ENCODE measurements at regions of chr15 and their contacts with region 1.

Region 1: GRCh38 chr15:40357723-40358470 is at the start of gene DISP2:
- DNase-seq: peak; percentile 95
- ATAC-seq: peak; percentile 93
- H3K4me3 ChIP-seq: peak within 1 kb of the TSS in 4 of 5 experiments; percentile 48 to 78 (median 58)
- H3K4me3 Mint-ChIP-seq: peak within 1 kb of the TSS; percentile 88
- H3K27ac ChIP-seq: no peak within 1 kb of the TSS
- H3K27ac Mint-ChIP-seq: peak within 1 kb of the TSS; percentile 59
- H3K4me1 ChIP-seq: peaks cover 6 to 11% of the 10 kb centered on the region in 2 donors
- H3K4me1 Mint-ChIP-seq: peaks cover 12% of the 10 kb centered on the region
- H3K27me3 ChIP-seq: peaks cover 0 to 6% (median 0%) of the 10 kb centered on the region in 4 experiments
- H3K27me3 Mint-ChIP-seq: peaks cover 8% of the 10 kb centered on the region
- CTCF ChIP-seq: no peak
- total RNA-seq, gene DISP2: 0.15 and 0.71 TPM in 2 replicates

Region 2: DNA sequence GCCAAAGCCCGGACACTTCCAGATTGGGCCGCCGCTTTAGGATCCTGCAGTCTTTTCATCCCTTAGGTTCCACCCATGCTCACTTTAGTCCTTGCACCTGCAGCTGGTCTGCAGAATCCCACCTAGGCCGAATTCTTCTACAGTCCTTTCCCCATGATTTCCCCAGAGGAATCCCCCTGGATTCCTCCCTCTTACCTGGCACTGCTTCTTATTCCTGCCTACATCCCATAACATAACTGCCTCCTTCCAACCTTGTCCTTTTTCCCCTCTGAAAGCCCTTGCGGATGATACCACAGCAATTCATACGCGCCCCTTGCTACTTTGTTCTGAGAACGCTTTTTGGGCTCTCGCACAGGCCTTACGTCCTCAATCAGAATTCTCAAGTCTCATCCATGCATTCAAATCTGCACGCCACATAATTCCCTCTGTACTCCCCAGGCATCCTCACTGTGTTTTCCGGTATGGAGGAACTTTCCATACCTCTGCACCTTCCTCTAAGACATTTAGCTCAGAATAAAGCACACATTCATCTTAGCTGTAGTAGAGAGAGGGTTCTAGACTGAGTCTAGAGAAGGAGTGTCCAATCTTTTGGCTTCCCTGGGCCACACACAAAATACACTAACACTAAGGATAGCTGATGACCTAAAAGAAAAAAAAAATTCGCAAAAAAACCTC is 423.4 kb before region 1 on chr15:
- CTCF ChIA-PET with region 1: no interaction called
- POLR2A ChIA-PET with region 1: no interaction called
- intact Hi-C with region 1: no loop called
- DNase-seq: no peak
- ATAC-seq: no peak
- H3K4me3 ChIP-seq: peak overlapping the region; percentile 45 to 80 (median 68)
- H3K4me3 Mint-ChIP-seq: peak overlapping the region; percentile 91
- H3K27ac ChIP-seq: peak overlapping the region in 1 of 2 donors; percentile 71
- H3K27ac Mint-ChIP-seq: peak overlapping the region; percentile 39
- H3K4me1 ChIP-seq: peaks cover 13 to 23% of the 10 kb centered on the region in 2 donors
- H3K4me1 Mint-ChIP-seq: peaks cover 38% of the 10 kb centered on the region
- H3K27me3 ChIP-seq: peaks cover 0 to 12% (median 3%) of the 10 kb centered on the region in 4 experiments
- H3K27me3 Mint-ChIP-seq: peaks cover 16% of the 10 kb centered on the region
- CTCF ChIP-seq: no peak

Region 3: DNA sequence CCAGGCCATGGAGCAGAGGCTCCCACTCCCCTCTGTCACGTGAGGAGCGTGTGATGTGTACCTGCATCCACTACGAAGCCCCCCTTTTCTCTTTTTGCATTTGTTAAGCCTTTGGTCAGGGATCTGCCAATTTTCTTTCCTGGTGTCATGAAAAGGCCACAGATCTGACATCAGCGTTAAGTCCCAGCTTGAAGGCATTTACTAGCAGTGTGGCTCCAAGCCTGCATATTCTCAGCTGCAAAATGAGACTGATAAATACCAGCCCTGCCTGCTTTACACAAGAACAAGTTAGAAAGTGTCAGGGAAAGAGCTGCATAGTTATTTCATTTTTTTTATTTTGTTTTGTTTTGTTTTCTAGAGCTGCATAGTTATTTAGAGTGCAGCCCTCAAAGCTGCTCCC is 72.7 kb before region 1 on chr15:
- CTCF ChIA-PET with region 1: no interaction called
- POLR2A ChIA-PET with region 1: no interaction called
- intact Hi-C with region 1: no loop called
- DNase-seq: no peak
- ATAC-seq: no peak
- H3K4me3 ChIP-seq: no peak overlapping the region
- H3K4me3 Mint-ChIP-seq: peak overlapping the region; percentile 13
- H3K27ac ChIP-seq: no peak overlapping the region
- H3K27ac Mint-ChIP-seq: no peak overlapping the region
- H3K4me1 ChIP-seq: peaks cover 13 to 17% of the 10 kb centered on the region in 2 donors
- H3K4me1 Mint-ChIP-seq: peaks cover 8% of the 10 kb centered on the region
- H3K27me3 ChIP-seq: peaks cover 0 to 19% (median 11%) of the 10 kb centered on the region in 4 experiments
- H3K27me3 Mint-ChIP-seq: peaks cover 5% of the 10 kb centered on the region
- CTCF ChIP-seq: no peak

Region 4: DNA sequence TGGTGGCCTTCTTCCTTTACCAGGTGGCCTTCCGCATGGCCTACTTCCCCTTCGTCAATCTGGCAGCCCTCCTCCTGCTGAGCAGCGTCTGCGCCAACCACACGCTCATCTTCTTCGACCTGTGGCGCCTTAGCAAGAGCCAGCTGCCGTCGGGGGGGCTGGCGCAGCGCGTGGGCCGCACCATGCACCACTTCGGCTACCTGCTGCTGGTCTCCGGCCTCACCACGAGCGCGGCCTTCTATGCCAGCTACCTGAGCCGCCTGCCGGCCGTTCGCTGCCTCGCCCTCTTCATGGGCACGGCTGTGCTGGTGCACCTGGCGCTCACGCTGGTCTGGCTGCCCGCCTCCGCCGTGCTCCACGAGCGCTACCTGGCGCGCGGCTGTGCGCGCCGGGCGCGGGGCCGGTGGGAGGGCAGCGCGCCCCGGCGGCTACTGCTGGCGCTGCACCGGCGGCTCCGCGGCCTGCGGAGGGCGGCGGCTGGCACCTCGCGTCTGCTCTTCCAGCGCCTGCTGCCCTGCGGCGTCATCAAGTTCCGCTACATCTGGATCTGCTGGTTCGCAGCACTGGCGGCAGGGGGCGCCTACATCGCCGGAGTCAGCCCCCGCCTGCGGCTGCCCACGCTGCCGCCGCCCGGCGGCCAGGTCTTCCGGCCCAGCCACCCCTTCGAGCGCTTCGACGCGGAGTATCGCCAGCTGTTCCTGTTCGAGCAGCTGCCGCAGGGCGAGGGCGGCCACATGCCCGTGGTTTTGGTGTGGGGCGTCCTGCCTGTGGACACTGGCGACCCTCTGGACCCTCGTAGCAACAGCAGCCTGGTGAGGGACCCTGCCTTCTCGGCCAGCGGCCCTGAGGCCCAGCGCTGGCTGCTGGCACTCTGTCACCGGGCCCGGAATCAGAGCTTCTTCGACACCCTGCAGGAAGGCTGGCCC is 10.1 kb after region 1 on chr15:
- CTCF ChIA-PET with region 1: interaction called, 3 read pairs
- POLR2A ChIA-PET with region 1: interaction called, 3 read pairs
- intact Hi-C with region 1: loop called (anchors 1 kb)
- DNase-seq: peak; percentile 94
- ATAC-seq: peak; percentile 92
- H3K4me3 ChIP-seq: peak overlapping the region; percentile 21 to 62 (median 57)
- H3K4me3 Mint-ChIP-seq: peak overlapping the region; percentile 86
- H3K27ac ChIP-seq: peak overlapping the region; percentile 26 to 43
- H3K27ac Mint-ChIP-seq: peak overlapping the region; percentile 83
- H3K4me1 ChIP-seq: peaks cover 14 to 26% of the 10 kb centered on the region in 2 donors
- H3K4me1 Mint-ChIP-seq: peaks cover 22% of the 10 kb centered on the region
- H3K27me3 ChIP-seq: no peaks in the 10 kb centered on the region
- H3K27me3 Mint-ChIP-seq: no peaks in the 10 kb centered on the region
- CTCF ChIP-seq: peak; percentile 94

Region 5: DNA sequence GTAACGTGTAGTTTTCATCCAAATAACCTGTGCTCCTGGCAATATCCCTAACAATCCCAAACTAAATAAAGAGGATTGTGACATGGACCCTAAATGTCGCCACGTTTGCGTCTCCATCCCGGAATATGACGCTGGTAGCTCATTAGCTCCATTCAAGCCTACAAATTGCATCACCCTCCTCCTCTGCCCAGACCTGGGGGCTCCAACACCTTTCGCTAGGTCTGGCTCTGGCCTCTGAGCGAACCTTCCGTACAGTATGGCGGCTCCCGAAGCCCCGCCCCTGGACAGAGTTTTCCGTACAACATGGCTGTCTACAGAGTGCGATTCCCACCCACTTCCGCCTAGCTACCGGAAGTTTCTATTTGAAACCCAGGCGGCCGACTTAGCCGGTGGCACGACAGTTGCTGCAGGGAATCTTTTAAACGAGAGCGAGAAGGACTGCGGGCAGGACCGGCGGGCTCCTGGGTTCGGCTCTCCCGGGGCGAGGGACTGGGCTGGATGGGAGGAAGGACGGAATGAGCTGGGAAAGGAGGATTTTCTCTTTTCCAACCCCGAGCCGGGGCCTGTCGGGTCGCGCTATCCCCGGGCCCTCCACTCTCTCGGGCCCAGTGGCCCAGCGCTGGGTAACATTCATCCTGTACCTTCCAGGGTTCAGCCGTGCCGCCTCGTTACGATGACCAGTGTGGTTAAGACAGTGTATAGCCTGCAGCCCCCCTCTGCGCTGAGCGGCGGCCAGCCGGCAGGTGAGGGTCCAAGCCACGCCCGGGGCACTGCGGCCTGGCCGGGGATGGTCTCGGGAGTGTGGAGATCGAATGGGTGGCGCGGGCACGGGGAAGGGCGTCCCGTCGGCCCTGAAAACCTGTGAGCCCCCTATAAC is 24.9 kb after region 1 on chr15 and contains the start of gene KNSTRN:
- CTCF ChIA-PET with region 1: interaction called, 3 read pairs
- POLR2A ChIA-PET with region 1: no interaction called
- intact Hi-C with region 1: loop called (anchors 1 kb)
- DNase-seq: peak; percentile 93
- ATAC-seq: peak; percentile 100
- H3K4me3 ChIP-seq: peak within 1 kb of the TSS; percentile 53 to 89 (median 84)
- H3K4me3 Mint-ChIP-seq: peak within 1 kb of the TSS; percentile 98
- H3K27ac ChIP-seq: peak within 1 kb of the TSS in 1 of 2 donors; percentile 40
- H3K27ac Mint-ChIP-seq: peak within 1 kb of the TSS; percentile 82
- H3K4me1 ChIP-seq: peaks cover 6 to 13% of the 10 kb centered on the region in 2 donors
- H3K4me1 Mint-ChIP-seq: peaks cover 12% of the 10 kb centered on the region
- H3K27me3 ChIP-seq: no peaks in the 10 kb centered on the region
- H3K27me3 Mint-ChIP-seq: no peaks in the 10 kb centered on the region
- CTCF ChIP-seq: no peak
- total RNA-seq, gene KNSTRN: 12.6 and 14.0 TPM in 2 replicates

Measured in B cell (primary cell).